IMR-90 (cell line): ENCODE measurements at regions of chr14 and their contacts with region 1.

Region 1: DNA sequence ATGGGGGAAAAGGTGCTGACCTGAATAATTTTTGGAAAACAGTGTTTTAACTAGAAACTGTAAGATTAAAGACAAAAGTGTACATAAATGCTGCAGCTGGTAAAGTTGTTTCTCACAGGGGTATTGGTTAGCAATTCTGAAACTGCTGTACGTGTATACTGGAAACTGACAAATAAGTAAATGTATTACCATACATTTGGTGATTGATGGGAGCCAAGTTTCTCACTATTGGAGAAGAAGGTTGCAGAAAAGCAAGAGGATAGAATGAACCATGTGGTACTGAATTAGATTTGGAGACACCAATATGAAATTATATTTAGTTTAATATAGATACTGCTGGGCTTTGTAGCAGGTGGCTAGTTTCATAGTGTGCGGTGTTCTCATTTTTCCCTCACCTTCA is 19.6 kb upstream of the FBXO33 start:
- DNase-seq: no peak
- ATAC-seq: no peak
- H3K4me3 ChIP-seq: no peak overlapping the region
- H3K27ac ChIP-seq: no peak overlapping the region
- H3K4me1 ChIP-seq: no peaks in the 10 kb centered on the region
- H3K27me3 ChIP-seq: no peaks in the 10 kb centered on the region
- CTCF ChIP-seq: no peak
- POLR2A ChIP-seq: no peak
- RAD21 ChIP-seq: no peak

Region 2: DNA sequence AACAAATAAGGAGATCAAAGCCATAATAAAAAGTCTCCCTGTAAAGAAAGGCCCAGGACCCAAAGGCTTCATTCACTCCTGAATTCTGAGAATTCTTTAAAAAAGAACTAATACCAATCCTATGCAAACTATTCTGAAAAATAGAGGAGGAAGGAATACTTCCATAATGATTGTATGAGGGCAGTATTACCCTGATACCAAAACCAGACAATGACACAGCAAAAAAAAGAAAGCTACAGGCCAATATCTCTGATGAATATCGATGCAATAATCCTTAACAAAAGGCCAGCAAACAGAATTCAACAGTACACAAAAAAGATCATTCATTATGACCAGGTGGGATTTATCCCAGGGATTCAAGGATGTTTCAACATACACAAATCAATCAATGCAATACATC is 438.2 kb after region 1 on chr14:
- CTCF ChIA-PET with region 1: no interaction called
- POLR2A ChIA-PET with region 1: no interaction called
- dilution Hi-C with region 1: no loop called
- in situ Hi-C with region 1: no loop called
- intact Hi-C with region 1: loop called (anchors 5 kb)
- DNase-seq: no peak
- ATAC-seq: no peak
- H3K4me3 ChIP-seq: no peak overlapping the region
- H3K27ac ChIP-seq: no peak overlapping the region
- H3K4me1 ChIP-seq: no peaks in the 10 kb centered on the region
- H3K27me3 ChIP-seq: no peaks in the 10 kb centered on the region
- CTCF ChIP-seq: no peak
- POLR2A ChIP-seq: no peak
- RAD21 ChIP-seq: no peak